Activated naive CD4-positive, alpha-beta T cell treated with anti-CD3 and anti-CD28 coated beads for 36 hours (primary cell): ENCODE measurements at regions of chr4 and their contacts with region 1.

Region 1: GRCh38 chr4:176492646-176493302 is 173.0 kb downstream of the SPCS3 start:
- DNase-seq: no peak
- H3K4me3 Mint-ChIP-seq: no peak overlapping the region
- H3K27ac Mint-ChIP-seq: no peak overlapping the region
- H3K4me1 Mint-ChIP-seq: peaks cover 5% of the 10 kb centered on the region
- H3K27me3 Mint-ChIP-seq: no peaks in the 10 kb centered on the region

Region 2: GRCh38 chr4:176745902-176746301 is 253.1 kb after region 1 on chr4:
- CTCF ChIA-PET with region 1: no interaction called
- intact Hi-C with region 1: no loop called
- DNase-seq: no peak
- H3K4me3 Mint-ChIP-seq: no peak overlapping the region
- H3K27ac Mint-ChIP-seq: no peak overlapping the region
- H3K4me1 Mint-ChIP-seq: no peaks in the 10 kb centered on the region
- H3K27me3 Mint-ChIP-seq: no peaks in the 10 kb centered on the region

Region 3: GRCh38 chr4:176902710-176903323 is 410.0 kb after region 1 on chr4:
- CTCF ChIA-PET with region 1: no interaction called
- intact Hi-C with region 1: loop called (anchors 5 kb)
- DNase-seq: no peak
- H3K4me3 Mint-ChIP-seq: no peak overlapping the region
- H3K27ac Mint-ChIP-seq: no peak overlapping the region
- H3K4me1 Mint-ChIP-seq: peaks cover 4% of the 10 kb centered on the region
- H3K27me3 Mint-ChIP-seq: no peaks in the 10 kb centered on the region